Breast epithelium (tissue), 4 donors: ENCODE measurements at regions of chr17 and their contacts with region 1.

Region 1: DNA sequence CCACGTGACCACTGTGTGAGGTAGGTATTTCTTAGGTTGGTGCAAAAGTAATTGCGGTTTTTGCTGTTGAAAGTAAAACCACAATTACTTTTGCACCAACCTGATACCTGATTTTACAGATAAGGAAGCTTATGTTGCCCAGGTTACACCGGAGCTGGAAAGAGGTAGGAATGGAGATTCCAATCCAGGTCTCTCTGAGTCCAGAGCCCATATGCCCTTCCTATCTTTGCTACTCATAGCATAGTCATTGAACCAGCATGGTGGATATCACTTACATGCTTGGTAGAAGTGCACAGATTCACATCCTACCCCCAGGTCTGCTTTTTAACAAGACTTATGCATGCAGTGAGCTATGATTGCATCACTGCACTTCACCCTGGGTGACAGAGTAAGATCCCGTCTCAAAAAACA is 61.8 kb downstream of the ARSG start:
- DNase-seq: no peak
- H3K4me3 ChIP-seq: no peak overlapping the region
- H3K27ac ChIP-seq: no peak overlapping the region
- H3K4me1 ChIP-seq: no peaks in the 10 kb centered on the region
- H3K27me3 ChIP-seq: no peaks in the 10 kb centered on the region
- CTCF ChIP-seq: no peak
- POLR2A ChIP-seq: no peak

Region 2: DNA sequence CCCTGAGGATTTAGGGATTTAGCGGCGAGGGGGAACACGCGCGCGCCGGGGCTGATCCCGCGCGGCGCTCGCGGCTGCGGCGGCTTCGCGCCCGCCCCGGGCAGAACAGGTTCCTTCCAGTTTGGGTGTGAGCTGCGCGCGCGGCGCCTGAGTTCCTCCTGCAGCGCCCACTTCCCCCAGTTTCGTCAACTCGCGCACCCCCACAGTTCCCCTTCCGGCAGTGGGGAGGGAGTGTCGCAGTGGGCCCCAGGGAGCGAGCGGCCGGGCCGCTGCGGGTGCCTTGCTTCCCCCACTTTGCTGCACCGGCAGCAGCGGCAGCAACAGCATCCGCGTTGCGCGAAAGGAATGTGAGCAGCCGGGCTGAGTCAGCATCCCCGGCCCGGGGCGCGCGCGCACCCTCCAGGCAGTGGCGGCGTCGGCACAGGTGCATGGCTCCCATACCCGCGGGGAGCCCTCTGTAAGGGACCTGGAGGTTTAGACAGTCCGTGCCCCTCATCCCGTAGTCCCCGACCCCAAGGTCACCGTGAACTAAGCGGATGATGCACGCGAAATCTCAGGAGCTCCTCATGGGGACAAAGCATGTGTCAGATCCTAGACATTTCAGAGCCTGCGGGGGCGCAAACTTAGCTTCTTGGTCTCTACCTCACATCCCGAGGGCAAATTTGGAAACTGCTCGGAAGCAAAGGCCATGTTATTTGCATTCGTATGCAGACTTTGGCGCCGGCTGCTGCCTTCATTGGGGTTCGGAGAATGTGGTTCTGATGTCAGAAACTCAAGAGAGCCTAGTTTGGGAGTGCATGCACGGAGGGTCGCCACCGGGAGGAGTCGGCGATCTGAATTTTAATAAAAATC is 61.0 kb before region 1 on chr17:
- intact Hi-C with region 1: no loop called
- DNase-seq: peak; percentile 65 to 80
- H3K4me3 ChIP-seq: peak overlapping the region; percentile 54 to 93 (median 61)
- H3K27ac ChIP-seq: peak overlapping the region; percentile 64 to 92
- H3K4me1 ChIP-seq: peaks cover 0 to 5% of the 10 kb centered on the region in 2 donors
- H3K27me3 ChIP-seq: peaks cover 0 to 26% of the 10 kb centered on the region in 2 donors
- CTCF ChIP-seq: no peak
- POLR2A ChIP-seq: peak; percentile 30

Region 3: GRCh38 chr17:68327823-68328570 is 25.1 kb before region 1 on chr17:
- intact Hi-C with region 1: loop called (anchors 1 kb)
- DNase-seq: no peak
- H3K4me3 ChIP-seq: no peak overlapping the region
- H3K27ac ChIP-seq: no peak overlapping the region
- H3K4me1 ChIP-seq: no peaks in the 10 kb centered on the region
- H3K27me3 ChIP-seq: no peaks in the 10 kb centered on the region
- CTCF ChIP-seq: no peak
- POLR2A ChIP-seq: no peak

Region 4: DNA sequence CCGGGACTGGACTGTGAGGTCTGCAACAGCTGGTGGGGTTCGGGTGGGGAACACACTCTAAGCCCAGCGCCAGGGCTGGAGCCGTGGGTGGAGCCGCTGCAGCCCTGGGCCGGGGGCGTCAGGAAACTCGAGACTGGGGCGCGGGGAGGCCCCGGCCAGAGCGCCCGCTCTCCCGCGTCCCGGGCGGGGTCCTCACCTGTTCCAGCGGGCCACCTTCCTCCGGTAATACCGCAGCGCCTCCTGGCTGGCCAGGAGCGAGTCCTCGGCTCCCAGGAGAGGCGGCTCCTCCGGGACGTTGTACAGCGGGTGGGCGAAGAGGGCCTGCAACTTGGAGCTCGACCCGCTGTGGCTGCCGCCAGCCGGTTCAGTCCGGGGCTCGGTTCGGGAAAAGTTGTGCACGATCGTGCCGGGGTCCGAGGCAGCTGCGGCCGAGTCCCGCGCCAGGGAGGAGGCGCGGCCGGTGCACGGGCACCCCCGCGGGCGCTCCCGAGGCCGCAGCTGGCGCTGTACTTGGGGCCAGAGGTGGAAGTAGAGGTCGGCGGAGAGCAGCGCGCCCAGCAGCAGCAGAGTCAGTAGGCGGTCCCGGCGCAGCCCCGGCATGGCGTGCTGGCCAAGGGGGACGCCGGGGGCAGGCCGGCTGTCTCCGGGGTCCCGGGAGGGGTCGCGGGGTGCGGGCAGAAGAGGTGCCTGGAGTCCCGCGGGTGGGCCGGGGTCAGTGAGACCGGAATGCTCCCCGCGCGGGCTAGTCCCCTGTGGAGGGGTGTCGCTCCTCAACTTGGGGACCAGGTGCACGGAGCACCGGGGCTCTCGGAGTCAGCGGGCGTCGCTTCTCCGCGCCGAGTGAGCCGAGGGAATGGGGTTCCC is 247.2 kb after region 1 on chr17:
- intact Hi-C with region 1: no loop called
- DNase-seq: no peak
- H3K4me3 ChIP-seq: peak overlapping the region; percentile 63 to 86 (median 81)
- H3K27ac ChIP-seq: peak overlapping the region; percentile 73 to 88
- H3K4me1 ChIP-seq: no peaks in the 10 kb centered on the region
- H3K27me3 ChIP-seq: no peaks in the 10 kb centered on the region
- CTCF ChIP-seq: peak in 1 of 3 donors; percentile 21
- POLR2A ChIP-seq: no peak

Region 5: DNA sequence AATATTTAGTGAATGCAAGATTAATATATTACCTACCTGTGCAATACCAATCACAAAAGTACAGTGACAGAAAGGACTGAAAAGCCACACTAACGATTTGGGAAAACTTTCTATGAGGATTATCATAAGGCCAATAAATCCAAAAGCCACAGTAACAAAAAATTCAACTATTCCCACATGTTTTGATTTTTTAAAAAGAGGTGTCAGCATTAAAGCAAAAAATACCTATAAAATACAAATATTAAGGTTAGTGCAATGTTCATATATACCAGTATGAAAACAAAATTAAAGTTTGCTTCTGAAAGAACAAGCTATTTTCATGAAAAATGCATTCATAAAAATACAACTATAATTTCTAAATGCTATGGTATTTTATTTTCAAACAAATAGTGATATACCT is 949.6 kb after region 1 on chr17:
- intact Hi-C with region 1: no loop called
- DNase-seq: no peak
- H3K4me3 ChIP-seq: no peak overlapping the region
- H3K27ac ChIP-seq: no peak overlapping the region
- H3K4me1 ChIP-seq: no peaks in the 10 kb centered on the region
- H3K27me3 ChIP-seq: no peaks in the 10 kb centered on the region
- CTCF ChIP-seq: no peak
- POLR2A ChIP-seq: no peak